Caco-2 (cell line): ENCODE measurements at regions of chrX and their contacts with region 1.

Region 1: DNA sequence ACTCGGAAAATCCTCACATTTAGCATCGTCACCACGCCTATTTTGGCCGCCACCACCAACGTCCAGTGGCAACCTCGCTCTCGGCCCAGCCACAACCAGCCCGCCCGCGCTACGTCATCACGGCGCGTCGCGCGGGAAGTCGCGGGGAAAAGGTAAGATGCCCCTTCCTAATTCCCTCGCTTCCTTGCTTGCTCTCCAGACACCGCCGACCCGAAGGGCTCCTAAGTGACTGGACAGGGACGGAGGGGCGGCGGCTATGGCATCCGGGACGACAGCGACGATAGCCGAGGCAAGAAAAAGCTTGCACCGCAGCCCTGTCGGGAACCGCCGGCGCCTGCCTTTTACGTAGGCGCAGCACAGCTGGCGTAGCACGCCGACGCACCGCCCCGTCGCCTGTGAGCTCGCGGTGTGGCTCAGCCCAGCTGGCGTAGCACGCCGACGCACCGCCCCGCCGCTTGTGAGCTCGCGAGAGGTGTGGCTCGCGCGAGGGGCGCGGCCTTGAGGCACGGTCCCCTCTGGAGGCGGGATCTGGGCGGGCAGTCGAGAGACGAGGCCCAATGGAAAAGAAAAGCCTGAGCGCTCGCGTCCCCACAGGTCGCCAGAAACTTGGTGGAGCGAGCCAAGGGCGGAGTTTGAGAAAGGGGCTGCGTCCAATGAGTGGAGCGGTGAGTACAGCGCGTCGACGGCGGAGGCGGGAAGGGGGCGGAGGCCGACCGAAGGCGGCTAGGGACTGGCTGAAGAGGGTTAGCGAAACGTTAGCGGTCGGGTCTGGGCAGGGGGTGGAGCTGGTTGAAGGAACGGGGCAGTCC is at the start of gene HDAC6:
- DNase-seq: peak; percentile 96 to 97
- H3K4me3 ChIP-seq: peak within 1 kb of the TSS; percentile 69
- H3K4me3 Mint-ChIP-seq: peak within 1 kb of the TSS; percentile 98
- H3K27ac Mint-ChIP-seq: peak within 1 kb of the TSS; percentile 99
- H3K4me1 ChIP-seq: no peaks in the 10 kb centered on the region; the same call in 1 of the 2 replicates
- H3K4me1 Mint-ChIP-seq: peaks cover 20% of the 10 kb centered on the region
- H3K27me3 ChIP-seq: no peaks in the 10 kb centered on the region
- H3K27me3 Mint-ChIP-seq: no peaks in the 10 kb centered on the region
- CTCF ChIP-seq: no peak
- total RNA-seq, gene HDAC6: 99.6 and 110 TPM in 2 replicates

Region 2: DNA sequence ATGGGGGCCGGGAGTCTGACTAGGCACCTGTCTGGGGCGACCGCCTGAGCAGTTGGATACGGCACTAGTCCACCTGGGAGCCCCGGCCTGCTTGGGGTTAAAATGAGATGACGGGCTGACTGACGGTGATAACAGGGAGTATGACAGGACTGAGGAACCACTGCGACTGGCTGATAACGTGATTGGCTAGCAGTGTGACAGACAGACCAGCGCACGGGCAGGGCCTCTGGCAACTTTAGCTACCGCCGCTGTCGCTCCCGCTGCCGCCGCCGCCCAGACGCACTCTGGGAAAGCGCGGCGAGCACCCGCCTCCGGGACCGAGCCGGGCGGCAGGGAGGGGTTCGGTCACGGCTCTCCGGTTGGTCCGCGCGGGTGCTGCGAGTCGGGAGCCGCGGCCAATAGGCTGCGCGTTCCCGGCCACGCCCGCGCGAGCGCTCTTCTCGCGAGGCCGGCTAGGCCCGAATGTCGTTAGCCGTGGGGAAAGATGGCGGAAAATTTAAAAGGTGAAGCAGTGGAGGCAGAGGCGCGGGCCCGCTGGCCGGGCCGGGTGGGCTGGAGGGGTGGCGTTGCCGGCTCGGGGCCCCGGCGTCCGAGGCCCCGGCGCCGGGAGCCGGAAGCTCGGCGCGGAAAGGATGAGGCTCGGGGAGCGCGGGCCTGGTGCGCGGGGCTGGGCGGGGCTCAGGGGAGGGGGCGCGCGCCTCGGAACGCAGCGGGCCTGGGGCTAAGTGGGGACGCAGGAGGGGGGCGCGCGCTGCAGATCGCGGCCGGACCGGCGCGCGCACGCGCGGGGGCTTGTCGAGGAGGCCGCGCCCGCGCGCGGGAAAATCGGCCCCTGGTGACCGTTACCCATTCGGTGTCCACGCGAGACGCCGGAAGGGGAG is 104.9 kb before region 1 on chrX and contains the start of gene SUV39H1:
- CTCF ChIA-PET with region 1: no interaction called
- POLR2A ChIA-PET with region 1: no interaction called
- intact Hi-C with region 1: loop called (anchors 5 kb)
- DNase-seq: peak; percentile 85 to 89
- H3K4me3 ChIP-seq: peak within 1 kb of the TSS; percentile 69
- H3K4me3 Mint-ChIP-seq: peak within 1 kb of the TSS; percentile 85
- H3K27ac Mint-ChIP-seq: peak within 1 kb of the TSS; percentile 79
- H3K4me1 ChIP-seq: no peaks in the 10 kb centered on the region
- H3K4me1 Mint-ChIP-seq: peaks cover 7% of the 10 kb centered on the region
- H3K27me3 ChIP-seq: no peaks in the 10 kb centered on the region
- H3K27me3 Mint-ChIP-seq: no peaks in the 10 kb centered on the region
- CTCF ChIP-seq: no peak
- total RNA-seq, gene SUV39H1: 13.9 and 15.8 TPM in 2 replicates

Region 3: DNA sequence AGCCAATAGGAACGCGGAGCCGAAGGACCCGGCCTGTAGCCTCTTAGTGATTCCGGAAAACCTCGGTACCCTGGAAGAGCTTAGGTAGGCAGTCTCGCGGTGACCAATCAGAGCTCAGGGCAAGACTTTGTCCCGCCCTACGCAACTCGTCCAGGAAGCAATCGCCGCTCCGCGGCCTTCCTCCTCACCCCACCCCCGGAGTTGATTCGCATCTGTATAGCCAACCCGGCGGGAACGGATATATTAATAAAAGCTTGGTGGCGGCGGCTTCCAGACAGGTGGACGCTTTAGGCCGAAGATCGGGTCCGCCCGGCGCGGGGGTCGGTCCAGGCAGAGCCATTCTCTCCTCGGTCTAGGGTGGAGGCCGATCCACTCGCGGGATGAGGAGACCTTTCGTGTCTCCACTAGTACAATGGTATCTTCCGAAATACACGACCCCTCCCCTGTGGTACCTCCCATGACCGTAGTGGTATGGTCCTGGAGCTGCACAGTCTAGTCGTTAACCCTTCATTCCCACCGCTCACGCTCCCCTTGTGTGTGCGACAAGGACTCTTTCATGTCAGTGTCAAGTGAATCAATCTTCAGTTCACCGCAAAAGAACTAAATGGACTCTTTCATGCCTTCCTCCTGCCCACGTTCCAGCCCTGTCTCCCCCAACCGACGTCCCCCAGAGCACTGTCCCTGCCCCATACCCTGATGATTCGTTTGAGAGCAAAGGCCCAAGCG is 64.1 kb before region 1 on chrX:
- CTCF ChIA-PET with region 1: no interaction called
- POLR2A ChIA-PET with region 1: interaction called, 9 read pairs
- intact Hi-C with region 1: loop called (anchors 1 kb)
- DNase-seq: peak; percentile 91 to 96
- H3K4me3 ChIP-seq: peak overlapping the region; percentile 56
- H3K4me3 Mint-ChIP-seq: peak overlapping the region; percentile 77
- H3K27ac Mint-ChIP-seq: peak overlapping the region; percentile 72
- H3K4me1 ChIP-seq: no peaks in the 10 kb centered on the region; the same call in 1 of the 2 replicates
- H3K4me1 Mint-ChIP-seq: peaks cover 6% of the 10 kb centered on the region
- H3K27me3 ChIP-seq: no peaks in the 10 kb centered on the region
- H3K27me3 Mint-ChIP-seq: no peaks in the 10 kb centered on the region
- CTCF ChIP-seq: no peak

Region 4: DNA sequence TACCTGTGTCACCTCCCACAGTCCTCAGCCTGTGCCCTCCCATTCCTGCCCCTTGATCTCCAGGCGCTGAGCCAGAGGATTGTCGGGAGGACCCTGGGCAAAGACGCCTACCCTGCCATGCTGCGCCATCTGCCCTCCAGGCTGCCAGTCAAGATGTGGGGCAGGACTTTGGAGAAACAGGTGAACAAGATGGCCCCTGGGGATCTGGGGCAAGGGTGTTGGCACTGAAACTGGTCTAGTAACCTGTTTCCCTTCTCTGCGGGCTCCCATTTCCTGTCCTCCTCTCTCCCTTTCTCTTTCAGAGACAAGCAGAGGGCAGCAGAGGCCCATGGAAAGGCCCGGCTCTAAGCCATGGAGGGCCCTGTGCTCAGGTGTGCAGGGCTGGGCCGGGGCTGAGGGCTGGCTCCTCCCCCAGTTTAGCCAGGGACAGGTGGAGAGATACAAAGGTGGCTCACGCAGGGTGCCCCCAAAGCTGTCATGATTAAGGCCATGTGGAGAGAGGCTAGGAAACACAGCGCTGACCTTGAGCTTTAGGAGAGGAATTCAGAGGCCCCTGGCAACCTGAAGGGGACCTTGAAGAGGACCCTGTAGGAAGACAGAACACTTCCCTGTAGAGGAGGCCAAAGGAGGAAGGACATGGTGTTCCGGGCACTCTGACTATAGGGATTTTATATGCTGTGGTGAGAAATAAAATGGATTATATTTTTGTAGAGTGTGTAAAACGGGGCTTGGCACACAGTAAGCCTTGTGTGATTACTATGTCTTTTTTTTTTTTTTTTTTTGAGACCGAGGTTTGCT is 39.6 kb before region 1 on chrX and contains the start of gene GLOD5:
- CTCF ChIA-PET with region 1: no interaction called
- POLR2A ChIA-PET with region 1: no interaction called
- intact Hi-C with region 1: loop called (anchors 5 kb)
- DNase-seq: peak; percentile 80 to 82
- H3K4me3 ChIP-seq: no peak within 1 kb of the TSS
- H3K4me3 Mint-ChIP-seq: peak within 1 kb of the TSS; percentile 65
- H3K27ac Mint-ChIP-seq: peak within 1 kb of the TSS; percentile 95
- H3K4me1 ChIP-seq: 0 out of 2 replicates have a peak, but pooled peaks cover 3% of the 10 kb centered on the region
- H3K4me1 Mint-ChIP-seq: peaks cover 9% of the 10 kb centered on the region
- H3K27me3 ChIP-seq: no peaks in the 10 kb centered on the region
- H3K27me3 Mint-ChIP-seq: no peaks in the 10 kb centered on the region
- CTCF ChIP-seq: peak; percentile 36 to 71
- total RNA-seq, gene GLOD5: not detected in 2 replicates

Region 5: GRCh38 chrX:48883729-48884128 is 82.2 kb after region 1 on chrX:
- CTCF ChIA-PET with region 1: no interaction called
- POLR2A ChIA-PET with region 1: no interaction called
- intact Hi-C with region 1: no loop called
- DNase-seq: no peak
- H3K4me3 ChIP-seq: no peak overlapping the region
- H3K4me3 Mint-ChIP-seq: no peak overlapping the region
- H3K27ac Mint-ChIP-seq: no peak overlapping the region
- H3K4me1 ChIP-seq: no peaks in the 10 kb centered on the region
- H3K4me1 Mint-ChIP-seq: no peaks in the 10 kb centered on the region
- H3K27me3 ChIP-seq: no peaks in the 10 kb centered on the region
- H3K27me3 Mint-ChIP-seq: no peaks in the 10 kb centered on the region
- CTCF ChIP-seq: peak in 1 of 2 experiments; percentile 16

Region 6: DNA sequence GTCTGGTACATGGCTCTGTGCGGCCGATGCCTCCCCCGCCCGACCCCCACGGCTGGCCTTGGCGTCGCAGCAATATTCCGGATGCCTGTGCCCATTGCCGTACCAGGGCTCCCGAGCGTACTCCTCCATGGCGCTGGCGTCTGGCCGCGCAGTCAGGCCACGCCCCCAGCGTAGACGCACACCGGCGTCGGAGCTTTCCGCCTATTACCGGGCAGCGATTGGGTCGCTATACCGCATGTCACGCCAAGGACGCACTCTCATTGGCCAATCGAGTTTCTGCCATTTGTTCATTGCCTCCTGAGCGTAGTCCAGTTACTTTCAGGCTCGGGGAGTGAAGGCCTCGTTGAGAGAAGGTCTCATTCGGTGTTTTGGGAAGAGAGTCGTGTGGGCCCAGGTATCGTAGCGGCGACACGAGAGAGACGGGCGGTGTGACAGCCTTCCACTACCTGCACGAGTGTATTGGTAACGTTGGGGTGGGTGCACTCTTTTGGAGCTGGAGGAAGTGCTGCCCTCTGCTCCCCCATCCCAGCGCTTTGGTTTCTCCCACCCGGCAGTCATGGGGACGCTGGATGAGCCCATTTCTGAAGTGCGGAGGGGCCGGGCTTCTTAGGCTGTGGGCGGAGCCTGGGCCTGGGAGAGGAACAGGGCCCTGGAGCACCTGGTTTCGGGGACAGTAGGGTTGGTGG is 96.3 kb after region 1 on chrX and contains the starts of genes PQBP1 and TIMM17B:
- CTCF ChIA-PET with region 1: no interaction called
- POLR2A ChIA-PET with region 1: interaction called, 7 read pairs
- intact Hi-C with region 1: loop called (anchors 5 kb)
- DNase-seq: peak; percentile 91 to 94
- H3K4me3 ChIP-seq: peak within 1 kb of the TSS; percentile 90
- H3K4me3 Mint-ChIP-seq: peak within 1 kb of the TSS; percentile 89
- H3K27ac Mint-ChIP-seq: peak within 1 kb of the TSS; percentile 98
- H3K4me1 ChIP-seq: no peaks in the 10 kb centered on the region
- H3K4me1 Mint-ChIP-seq: no peaks in the 10 kb centered on the region
- H3K27me3 ChIP-seq: no peaks in the 10 kb centered on the region
- H3K27me3 Mint-ChIP-seq: no peaks in the 10 kb centered on the region
- CTCF ChIP-seq: no peak
- total RNA-seq, gene PQBP1: 111 and 114 TPM in 2 replicates
- total RNA-seq, gene TIMM17B: 82.5 and 90.6 TPM in 2 replicates

Region 7: GRCh38 chrX:48917139-48918001 is 115.9 kb after region 1 on chrX:
- CTCF ChIA-PET with region 1: no interaction called
- POLR2A ChIA-PET with region 1: interaction called, 9 read pairs
- intact Hi-C with region 1: loop called (anchors 5 kb)
- DNase-seq: peak; percentile 87 to 88
- H3K4me3 ChIP-seq: peak overlapping the region; percentile 80
- H3K4me3 Mint-ChIP-seq: peak overlapping the region; percentile 91
- H3K27ac Mint-ChIP-seq: peak overlapping the region; percentile 90
- H3K4me1 ChIP-seq: peaks cover 10% of the 10 kb centered on the region; the same call in 1 of the 2 replicates
- H3K4me1 Mint-ChIP-seq: peaks cover 24% of the 10 kb centered on the region
- H3K27me3 ChIP-seq: no peaks in the 10 kb centered on the region
- H3K27me3 Mint-ChIP-seq: no peaks in the 10 kb centered on the region
- CTCF ChIP-seq: peak; percentile 80 to 84

Region 8: DNA sequence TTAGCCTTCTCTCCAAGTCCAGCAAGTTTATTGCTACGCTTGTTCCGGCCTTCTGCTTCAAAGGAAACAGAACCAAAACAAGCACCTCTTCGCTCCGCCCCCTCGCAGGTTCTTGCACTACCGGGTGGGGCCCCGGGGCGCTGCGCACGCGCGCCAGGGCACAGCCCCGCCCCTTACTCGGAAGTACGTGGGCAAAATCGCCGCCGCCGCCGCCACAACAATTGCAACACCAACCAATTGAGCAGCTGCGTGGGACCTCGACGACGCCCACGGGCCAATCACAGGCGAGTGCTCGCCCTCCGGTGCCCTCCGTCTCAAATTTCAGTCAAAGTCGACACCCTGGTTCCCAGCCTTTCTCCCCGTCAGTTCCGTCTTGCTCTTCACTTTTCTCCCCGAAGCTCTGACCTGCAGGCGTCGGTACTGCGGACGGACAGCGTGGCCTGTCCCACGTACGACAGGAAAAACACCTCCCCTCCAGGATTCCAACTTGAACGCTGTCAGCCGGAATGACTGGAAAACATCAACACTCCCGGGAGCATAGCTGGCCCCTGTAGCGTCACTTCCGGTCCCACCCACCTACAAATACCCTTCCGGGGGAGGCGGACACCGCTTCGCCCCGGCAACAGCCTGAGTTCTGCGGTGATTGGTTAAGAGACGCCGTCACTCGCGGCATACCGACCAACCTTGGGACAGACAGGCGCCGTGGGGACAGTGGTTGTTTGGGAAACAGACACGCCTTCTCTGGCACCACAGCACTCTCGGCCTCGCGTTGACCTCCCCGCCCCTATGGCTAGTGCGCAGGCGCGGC is 156.5 kb after region 1 on chrX:
- CTCF ChIA-PET with region 1: no interaction called
- POLR2A ChIA-PET with region 1: interaction called, 22 read pairs
- intact Hi-C with region 1: no loop called
- DNase-seq: peak; percentile 94 to 97
- H3K4me3 ChIP-seq: peak overlapping the region; percentile 73
- H3K4me3 Mint-ChIP-seq: peak overlapping the region; percentile 98
- H3K27ac Mint-ChIP-seq: peak overlapping the region; percentile 100
- H3K4me1 ChIP-seq: no peaks in the 10 kb centered on the region
- H3K4me1 Mint-ChIP-seq: peaks cover 15% of the 10 kb centered on the region
- H3K27me3 ChIP-seq: no peaks in the 10 kb centered on the region
- H3K27me3 Mint-ChIP-seq: no peaks in the 10 kb centered on the region
- CTCF ChIP-seq: no peak